ENCODE measurements at regions of chr7 and their contacts with region 1.

Region 1: GRCh38 chr7:24819916-24820689 is 62.8 kb upstream of the GSDME start:
- DNase-seq: peak; percentile 35 to 89 (median 59)
- ATAC-seq: peak; percentile 21 to 25 (median 22)
- H3K4me3 ChIP-seq: peak overlapping the region in 1 of 2 donors; percentile 5
- H3K4me3 Mint-ChIP-seq: peak overlapping the region; percentile 48 to 75 (median 72)
- H3K27ac ChIP-seq: peak overlapping the region; percentile 92
- H3K27ac Mint-ChIP-seq: peak overlapping the region; percentile 94 to 95
- H3K4me1 ChIP-seq: peaks cover 13 to 27% of the 10 kb centered on the region in 2 experiments
- H3K4me1 Mint-ChIP-seq: peaks cover 35 to 61% (median 41%) of the 10 kb centered on the region in 3 donors
- H3K27me3 ChIP-seq: no peaks in the 10 kb centered on the region
- H3K27me3 Mint-ChIP-seq: no peaks in the 10 kb centered on the region

Region 2: GRCh38 chr7:24797270-24797669 is 22.8 kb before region 1 on chr7:
- CTCF ChIA-PET with region 1: no interaction called
- POLR2A ChIA-PET with region 1: no interaction called
- DNase-seq: no peak
- ATAC-seq: no peak
- H3K4me3 ChIP-seq: no peak overlapping the region
- H3K4me3 Mint-ChIP-seq: no peak overlapping the region
- H3K27ac ChIP-seq: no peak overlapping the region
- H3K27ac Mint-ChIP-seq: no peak overlapping the region
- H3K4me1 ChIP-seq: peaks cover 0 to 3% of the 10 kb centered on the region in 2 experiments
- H3K4me1 Mint-ChIP-seq: peaks cover 21 to 26% (median 26%) of the 10 kb centered on the region in 3 donors
- H3K27me3 ChIP-seq: no peaks in the 10 kb centered on the region
- H3K27me3 Mint-ChIP-seq: no peaks in the 10 kb centered on the region

Region 3: GRCh38 chr7:24882989-24883621 is 63.0 kb after region 1 on chr7:
- CTCF ChIA-PET with region 1: no interaction called
- POLR2A ChIA-PET with region 1: no interaction called
- DNase-seq: no peak
- ATAC-seq: no peak
- H3K4me3 ChIP-seq: no peak overlapping the region
- H3K4me3 Mint-ChIP-seq: no peak overlapping the region
- H3K27ac ChIP-seq: no peak overlapping the region
- H3K27ac Mint-ChIP-seq: peak overlapping the region; percentile 37 to 59
- H3K4me1 ChIP-seq: no peaks in the 10 kb centered on the region
- H3K4me1 Mint-ChIP-seq: peaks cover 7 to 33% (median 29%) of the 10 kb centered on the region in 3 donors
- H3K27me3 ChIP-seq: no peaks in the 10 kb centered on the region
- H3K27me3 Mint-ChIP-seq: no peaks in the 10 kb centered on the region

Region 4: DNA sequence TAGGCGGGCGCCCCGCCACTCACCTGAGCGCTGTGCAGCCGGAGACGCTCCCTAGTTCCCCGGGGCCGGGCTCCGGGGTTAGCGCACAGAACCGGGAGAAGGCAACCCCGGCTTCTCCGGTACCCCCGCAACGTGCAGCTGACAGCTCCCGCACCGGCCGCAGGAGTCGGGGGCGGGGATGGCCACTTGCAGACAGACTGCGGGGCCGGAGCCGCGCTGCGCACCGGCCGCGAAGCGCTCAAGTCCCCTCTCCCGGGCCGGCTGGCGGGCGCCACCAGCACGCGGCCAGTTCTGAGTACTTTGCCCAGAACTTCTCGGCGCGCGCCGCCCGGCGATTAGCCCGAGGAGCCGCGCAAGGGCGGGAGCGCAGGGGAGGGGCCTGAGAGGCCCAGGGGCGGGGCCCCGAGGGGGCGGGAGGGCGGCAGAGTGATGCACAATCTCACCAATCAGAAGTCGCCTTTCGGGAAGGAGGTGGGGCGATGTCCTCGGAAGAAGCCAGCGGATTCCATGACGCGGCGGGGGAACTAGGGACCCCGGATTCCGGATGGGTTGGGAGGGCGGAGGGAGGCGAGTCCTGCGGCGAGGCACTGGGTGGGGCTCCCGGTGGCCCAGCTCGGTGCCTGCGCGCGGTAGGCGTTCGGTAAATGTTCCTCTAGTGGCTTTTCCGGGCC is 159.9 kb after region 1 on chr7 and contains the start of gene OSBPL3:
- CTCF ChIA-PET with region 1: interaction called in 1 of 2 experiments, 43 read pairs
- POLR2A ChIA-PET with region 1: interaction called in 1 of 2 experiments, 6 read pairs
- DNase-seq: peak; percentile 77 to 97 (median 90)
- ATAC-seq: peak; percentile 80 to 87 (median 84)
- H3K4me3 ChIP-seq: peak within 1 kb of the TSS; percentile 89 to 91
- H3K4me3 Mint-ChIP-seq: peak within 1 kb of the TSS; percentile 86 to 97 (median 96)
- H3K27ac ChIP-seq: peak within 1 kb of the TSS; percentile 80
- H3K27ac Mint-ChIP-seq: peak within 1 kb of the TSS; percentile 94
- H3K4me1 ChIP-seq: peaks cover 27 to 36% of the 10 kb centered on the region in 2 experiments
- H3K4me1 Mint-ChIP-seq: peaks cover 58 to 67% (median 65%) of the 10 kb centered on the region in 3 donors
- H3K27me3 ChIP-seq: peaks cover 0 to 5% of the 10 kb centered on the region in 2 experiments
- H3K27me3 Mint-ChIP-seq: no peaks in the 10 kb centered on the region
- total RNA-seq, gene OSBPL3: 30.2 to 62.7 (median 54.7) TPM

Region 5: DNA sequence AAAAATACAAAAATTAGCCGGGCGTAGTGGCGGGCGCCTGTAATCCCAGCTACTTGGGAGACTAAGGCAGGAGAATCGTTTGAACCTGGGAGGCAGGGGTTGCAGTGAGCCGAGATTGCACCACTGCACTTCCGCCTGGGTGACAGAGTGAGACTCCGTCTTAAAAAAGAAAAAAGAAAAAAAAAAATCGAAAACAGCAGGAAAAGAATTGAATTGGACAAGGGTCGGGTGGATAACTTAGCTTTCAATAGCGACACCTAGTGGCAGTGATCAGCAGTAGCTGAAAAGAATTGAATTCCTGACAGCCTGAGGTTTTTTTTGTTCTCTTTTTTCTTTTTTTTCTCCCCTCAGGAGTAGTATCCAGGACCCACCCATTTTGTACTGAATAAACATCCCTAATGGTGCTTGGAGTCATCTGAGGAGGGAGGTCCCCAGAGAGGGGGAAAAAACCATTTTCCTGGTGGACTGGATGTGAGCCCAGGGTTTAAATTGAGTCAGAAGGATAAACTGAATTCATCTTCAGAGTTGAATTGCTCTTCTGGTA is 249.9 kb after region 1 on chr7:
- CTCF ChIA-PET with region 1: interaction called, 4 to 62 read pairs
- POLR2A ChIA-PET with region 1: interaction called in 1 of 2 experiments, 5 read pairs
- DNase-seq: peak in 30 of 35 experiments; percentile 3 to 81 (median 24)
- ATAC-seq: peak in 1 of 4 experiments; percentile 61
- H3K4me3 ChIP-seq: no peak overlapping the region
- H3K4me3 Mint-ChIP-seq: no peak overlapping the region
- H3K27ac ChIP-seq: no peak overlapping the region
- H3K27ac Mint-ChIP-seq: no peak overlapping the region
- H3K4me1 ChIP-seq: peaks cover 0 to 3% of the 10 kb centered on the region in 2 experiments
- H3K4me1 Mint-ChIP-seq: peaks cover 4 to 6% (median 5%) of the 10 kb centered on the region in 3 donors
- H3K27me3 ChIP-seq: no peaks in the 10 kb centered on the region
- H3K27me3 Mint-ChIP-seq: no peaks in the 10 kb centered on the region

Region 6: DNA sequence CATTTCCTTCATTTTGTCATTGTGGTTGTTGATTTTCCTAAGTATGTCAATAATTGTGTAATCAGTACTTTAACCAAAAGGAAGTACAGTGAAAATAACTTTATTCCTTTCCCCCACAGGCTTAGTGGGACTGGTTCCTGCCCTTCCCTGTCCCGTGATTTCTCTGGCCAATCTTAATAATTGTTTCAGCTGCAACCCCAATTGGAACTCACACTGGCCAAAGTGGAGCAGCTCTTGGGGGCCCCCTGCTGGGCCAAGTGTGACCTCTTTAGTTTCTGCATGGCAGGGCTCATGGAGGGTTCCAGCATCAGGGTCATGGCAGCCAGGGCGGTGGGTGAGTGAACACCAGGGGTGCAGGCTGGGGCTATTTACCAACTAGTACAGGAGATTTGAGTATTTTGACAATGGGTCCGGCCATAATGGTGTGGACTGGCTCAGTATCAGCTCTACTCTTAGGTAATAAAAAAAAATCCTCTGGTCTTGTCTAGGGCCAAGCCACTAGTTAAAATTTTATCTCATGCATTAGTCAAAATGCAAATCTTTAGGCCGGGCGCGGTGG is 273.2 kb after region 1 on chr7:
- CTCF ChIA-PET with region 1: interaction called, 9 to 60 read pairs
- POLR2A ChIA-PET with region 1: interaction called in 1 of 2 experiments, 10 read pairs
- DNase-seq: peak; percentile 22 to 80 (median 68)
- ATAC-seq: peak; percentile 77 to 80 (median 78)
- H3K4me3 ChIP-seq: no peak overlapping the region
- H3K4me3 Mint-ChIP-seq: no peak overlapping the region
- H3K27ac ChIP-seq: no peak overlapping the region
- H3K27ac Mint-ChIP-seq: no peak overlapping the region
- H3K4me1 ChIP-seq: peaks cover 0 to 8% of the 10 kb centered on the region in 2 experiments
- H3K4me1 Mint-ChIP-seq: peaks cover 5 to 11% (median 5%) of the 10 kb centered on the region in 3 donors
- H3K27me3 ChIP-seq: no peaks in the 10 kb centered on the region
- H3K27me3 Mint-ChIP-seq: no peaks in the 10 kb centered on the region

Region 7: DNA sequence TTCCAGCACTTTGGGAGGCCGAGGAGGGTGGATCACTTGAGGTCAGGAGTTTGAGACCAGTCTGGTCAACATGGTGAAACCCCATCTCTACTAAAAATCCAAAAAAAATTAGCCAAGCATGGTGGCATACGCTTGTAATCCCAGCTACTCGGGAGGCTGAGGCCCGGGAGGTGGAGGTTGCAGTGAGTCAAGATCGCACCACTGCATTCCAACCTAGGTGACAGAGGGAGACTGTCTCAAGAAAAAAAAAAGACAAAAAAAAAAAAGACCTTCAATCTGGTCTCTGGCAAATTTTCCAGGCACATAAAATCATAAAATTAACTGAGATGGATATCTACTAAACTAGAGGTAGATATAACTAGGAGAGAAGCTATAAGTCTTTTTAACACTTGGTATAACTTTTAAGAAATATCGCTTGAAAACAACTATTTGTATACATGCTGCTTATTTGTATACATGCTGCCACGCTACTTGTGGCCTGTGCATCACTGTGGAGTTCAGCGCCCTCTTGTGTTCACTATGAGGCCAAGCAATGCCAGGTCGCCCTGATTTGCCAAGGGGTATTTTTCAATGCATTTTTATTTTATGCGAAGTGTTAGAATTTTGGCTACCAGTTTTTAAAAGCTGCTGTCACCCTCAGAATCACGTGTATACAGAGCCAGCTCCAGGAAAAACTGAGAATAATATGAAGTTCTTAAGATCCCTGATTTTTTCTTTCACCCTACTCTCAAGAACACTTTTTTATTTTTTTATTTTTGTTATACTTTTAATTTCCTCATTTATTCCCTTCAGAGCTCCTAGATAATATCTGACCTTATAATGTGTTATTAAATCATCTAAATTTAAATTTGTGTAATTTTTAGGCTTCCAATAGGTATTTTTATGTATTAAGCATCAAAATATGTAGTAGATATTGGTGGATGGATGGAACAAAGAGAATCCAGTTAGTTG is 278.3 kb after region 1 on chr7:
- CTCF ChIA-PET with region 1: interaction called, 9 to 60 read pairs
- POLR2A ChIA-PET with region 1: interaction called in 1 of 2 experiments, 10 read pairs
- DNase-seq: peak in 34 of 35 experiments; percentile 19 to 81 (median 46)
- ATAC-seq: peak; percentile 68 to 83 (median 72)
- H3K4me3 ChIP-seq: no peak overlapping the region
- H3K4me3 Mint-ChIP-seq: no peak overlapping the region
- H3K27ac ChIP-seq: no peak overlapping the region
- H3K27ac Mint-ChIP-seq: no peak overlapping the region
- H3K4me1 ChIP-seq: peaks cover 0 to 7% of the 10 kb centered on the region in 2 experiments
- H3K4me1 Mint-ChIP-seq: peaks cover 4 to 9% (median 5%) of the 10 kb centered on the region in 3 donors
- H3K27me3 ChIP-seq: no peaks in the 10 kb centered on the region
- H3K27me3 Mint-ChIP-seq: no peaks in the 10 kb centered on the region

Region 8: DNA sequence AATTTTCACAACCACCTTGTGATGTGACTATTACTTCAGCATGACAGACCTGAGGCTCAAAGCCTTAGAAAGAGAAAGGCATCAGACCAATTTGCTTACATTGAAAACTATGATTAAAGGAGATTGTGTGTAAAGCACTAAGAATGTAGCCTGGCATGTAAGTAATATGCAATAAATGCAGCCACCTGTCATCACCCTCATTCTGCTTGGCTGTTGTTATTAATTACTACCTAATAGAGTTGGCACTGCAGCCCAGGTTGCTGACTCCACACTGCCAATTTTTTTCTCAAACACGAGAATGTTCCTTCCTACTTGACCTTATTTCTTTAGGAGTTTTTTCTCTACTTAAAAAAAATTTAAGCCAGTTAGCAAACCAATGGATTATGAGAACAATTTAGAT is 469.4 kb after region 1 on chr7:
- CTCF ChIA-PET with region 1: no interaction called
- POLR2A ChIA-PET with region 1: no interaction called
- DNase-seq: no peak
- ATAC-seq: no peak
- H3K4me3 ChIP-seq: no peak overlapping the region
- H3K4me3 Mint-ChIP-seq: no peak overlapping the region
- H3K27ac ChIP-seq: no peak overlapping the region
- H3K27ac Mint-ChIP-seq: no peak overlapping the region
- H3K4me1 ChIP-seq: no peaks in the 10 kb centered on the region
- H3K4me1 Mint-ChIP-seq: no peaks in the 10 kb centered on the region
- H3K27me3 ChIP-seq: no peaks in the 10 kb centered on the region
- H3K27me3 Mint-ChIP-seq: peaks cover 0 to 11% of the 10 kb centered on the region in 2 donors

Measured in T-cell (primary cell).